ENCODE measurements at regions of chr2 and their contacts with region 1.

Region 1: GRCh38 chr2:177332041-177332991 is 60.3 kb upstream of the AGPS start:
- DNase-seq: peak; percentile 87
- H3K4me3 ChIP-seq: no peak overlapping the region
- H3K27ac ChIP-seq: peak overlapping the region; percentile 32
- H3K4me1 ChIP-seq: peaks cover 24% of the 10 kb centered on the region
- H3K27me3 ChIP-seq: no peaks in the 10 kb centered on the region
- CTCF ChIP-seq: peak; percentile 51 to 64
- POLR2A ChIP-seq: peak; percentile 25

Region 2: DNA sequence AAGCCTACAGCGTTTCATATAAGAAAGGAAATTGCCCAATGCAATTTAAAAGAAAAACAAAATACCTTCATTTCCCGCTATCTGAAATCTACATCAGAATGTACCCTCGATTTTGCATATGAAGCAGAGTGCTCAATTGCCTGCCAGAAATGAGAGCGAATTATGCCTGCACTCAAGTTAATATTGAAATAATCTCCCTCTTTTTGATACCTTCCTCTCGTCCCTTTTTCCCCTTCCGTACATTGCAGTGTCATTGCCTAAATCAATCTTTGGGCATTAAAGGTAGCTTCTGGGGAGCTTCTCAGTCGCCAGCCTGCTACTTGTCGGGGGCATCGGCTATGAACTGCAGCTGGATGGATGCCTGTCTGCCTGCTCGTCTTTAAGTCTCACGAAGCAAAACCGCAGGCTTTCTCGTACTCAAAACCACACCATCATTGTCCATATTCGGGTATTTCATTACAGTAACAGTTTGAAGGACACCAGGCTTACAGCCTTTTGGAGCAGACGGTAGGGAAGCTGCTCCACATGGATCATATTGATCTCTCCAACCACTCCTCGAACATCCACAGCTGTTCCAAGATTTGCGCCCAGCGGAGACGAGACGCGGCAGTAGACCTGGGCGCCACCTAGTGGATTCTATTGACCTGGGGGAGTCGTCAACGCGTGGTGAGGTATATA is 183.7 kb before region 1 on chr2:
- CTCF ChIA-PET with region 1: interaction called, 4 read pairs
- POLR2A ChIA-PET with region 1: no interaction called
- dilution Hi-C with region 1: loop called (anchors 10 kb)
- intact Hi-C with region 1: no loop called
- DNase-seq: peak; percentile 85
- H3K4me3 ChIP-seq: peak overlapping the region in 2 of 3 experiments; percentile 29 to 62
- H3K27ac ChIP-seq: no peak overlapping the region
- H3K4me1 ChIP-seq: peaks cover 10% of the 10 kb centered on the region
- H3K27me3 ChIP-seq: peaks cover 9% of the 10 kb centered on the region in 2 experiments
- CTCF ChIP-seq: peak; percentile 87 to 89
- POLR2A ChIP-seq: no peak

Region 3: DNA sequence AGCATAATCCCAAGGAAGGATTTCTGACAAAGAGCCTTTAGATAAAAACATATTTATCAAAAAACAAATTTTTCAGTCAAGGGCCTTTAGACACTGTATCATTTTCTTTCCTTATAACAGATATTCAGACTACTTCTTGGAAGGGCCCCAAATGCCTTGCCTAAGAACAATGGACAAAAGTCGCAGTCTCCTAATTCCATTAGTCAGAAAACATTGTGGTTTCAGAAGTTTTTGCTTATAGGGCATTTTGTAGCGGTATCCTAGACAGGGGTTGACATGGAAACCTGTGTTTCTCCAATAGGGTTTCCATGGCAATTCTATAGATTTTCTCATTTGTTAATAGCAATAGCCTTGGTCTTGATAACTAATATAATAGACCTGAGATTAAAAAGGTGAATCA is 23.6 kb after region 1 on chr2:
- CTCF ChIA-PET with region 1: interaction called, 11 read pairs
- POLR2A ChIA-PET with region 1: no interaction called
- dilution Hi-C with region 1: no loop called
- intact Hi-C with region 1: no loop called
- DNase-seq: peak; percentile 30
- H3K4me3 ChIP-seq: no peak overlapping the region
- H3K27ac ChIP-seq: no peak overlapping the region
- H3K4me1 ChIP-seq: peaks cover 6% of the 10 kb centered on the region
- H3K27me3 ChIP-seq: no peaks in the 10 kb centered on the region
- CTCF ChIP-seq: no peak
- POLR2A ChIP-seq: no peak

Region 4: GRCh38 chr2:177419274-177419673 is 87.0 kb after region 1 on chr2:
- CTCF ChIA-PET with region 1: interaction called, 195 read pairs
- POLR2A ChIA-PET with region 1: no interaction called
- dilution Hi-C with region 1: no loop called
- intact Hi-C with region 1: loop called (anchors 1 kb)
- DNase-seq: no peak
- H3K4me3 ChIP-seq: no peak overlapping the region
- H3K27ac ChIP-seq: no peak overlapping the region
- H3K4me1 ChIP-seq: peaks cover 26% of the 10 kb centered on the region
- H3K27me3 ChIP-seq: no peaks in the 10 kb centered on the region
- CTCF ChIP-seq: no peak
- POLR2A ChIP-seq: no peak

Region 5: DNA sequence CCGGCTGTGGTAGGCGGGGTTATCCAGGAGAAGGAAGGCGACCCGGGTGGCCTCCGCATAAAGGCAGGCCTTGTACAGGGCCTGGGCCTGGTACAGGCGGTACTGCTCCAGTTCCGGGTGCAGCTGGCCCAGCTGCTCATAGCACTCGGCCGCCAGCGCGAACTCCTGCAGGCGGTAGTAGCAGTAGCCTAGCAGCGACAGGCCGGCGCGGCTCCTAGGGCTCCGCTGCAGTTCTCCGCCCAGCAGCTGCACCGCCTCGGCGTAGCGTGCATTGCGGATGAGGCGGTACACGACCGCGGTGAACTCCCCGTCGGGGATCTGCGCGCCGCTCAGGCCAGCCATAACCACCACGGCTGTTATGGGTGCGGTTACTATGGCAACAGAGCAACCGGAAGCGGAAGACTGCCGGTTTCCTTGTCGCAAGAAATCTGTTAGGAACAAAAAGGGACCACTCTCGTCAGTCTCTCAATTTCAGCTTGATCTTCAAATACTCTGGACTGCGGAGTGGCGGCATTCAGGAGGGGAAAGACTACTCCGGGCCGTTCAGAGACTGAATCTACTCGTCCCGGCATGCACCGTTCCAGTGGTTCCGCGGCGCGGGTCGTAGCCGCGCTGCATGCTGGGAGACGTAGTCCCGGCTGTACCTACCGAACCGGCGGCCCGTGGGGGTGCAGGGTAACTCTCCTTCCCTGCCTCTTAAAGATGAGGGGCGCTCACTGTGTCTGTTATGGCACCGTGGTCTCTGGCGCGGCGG is 220.3 kb after region 1 on chr2:
- CTCF ChIA-PET with region 1: no interaction called
- POLR2A ChIA-PET with region 1: no interaction called
- dilution Hi-C with region 1: no loop called
- intact Hi-C with region 1: loop called (anchors 1 kb)
- DNase-seq: peak; percentile 90
- H3K4me3 ChIP-seq: peak overlapping the region; percentile 57 to 93 (median 84)
- H3K27ac ChIP-seq: peak overlapping the region; percentile 91
- H3K4me1 ChIP-seq: peaks cover 41% of the 10 kb centered on the region
- H3K27me3 ChIP-seq: no peaks in the 10 kb centered on the region
- CTCF ChIP-seq: no peak
- POLR2A ChIP-seq: peak; percentile 47

Region 6: GRCh38 chr2:177763532-177764265 is 431.4 kb after region 1 on chr2:
- CTCF ChIA-PET with region 1: interaction called, 43 read pairs
- POLR2A ChIA-PET with region 1: no interaction called
- dilution Hi-C with region 1: no loop called
- intact Hi-C with region 1: loop called (anchors 1 kb)
- DNase-seq: peak; percentile 70
- H3K4me3 ChIP-seq: no peak overlapping the region
- H3K27ac ChIP-seq: no peak overlapping the region
- H3K4me1 ChIP-seq: peaks cover under 1% of the 10 kb centered on the region
- H3K27me3 ChIP-seq: no peaks in the 10 kb centered on the region
- CTCF ChIP-seq: peak; percentile 82 to 90
- POLR2A ChIP-seq: no peak